ENCODE measurements at regions of chr17 and their contacts with region 1.

Region 1: GRCh38 chr17:82236142-82236981 is 7.5 kb downstream of the SLC16A3 start:
- DNase-seq: peak; percentile 70 to 93 (median 89)
- ATAC-seq: peak; percentile 31 to 58 (median 55)
- H3K4me3 ChIP-seq: no peak overlapping the region
- H3K27ac ChIP-seq: no peak overlapping the region
- H3K4me1 ChIP-seq: peaks cover 4 to 47% (median 29%) of the 10 kb centered on the region in 4 donors
- H3K27me3 ChIP-seq: no peaks in the 10 kb centered on the region
- CTCF ChIP-seq: peak; percentile 85 to 92 (median 88)
- POLR2A ChIP-seq: no peak

Region 2: GRCh38 chr17:82170412-82170961 is 65.9 kb before region 1 on chr17:
- intact Hi-C with region 1: no loop called
- DNase-seq: peak in 2 of 3 donors; percentile 60
- ATAC-seq: peak; percentile 28 to 62 (median 50)
- H3K4me3 ChIP-seq: no peak overlapping the region
- H3K27ac ChIP-seq: no peak overlapping the region
- H3K4me1 ChIP-seq: no peaks in the 10 kb centered on the region
- H3K27me3 ChIP-seq: no peaks in the 10 kb centered on the region
- CTCF ChIP-seq: no peak
- POLR2A ChIP-seq: no peak

Region 3: GRCh38 chr17:82315703-82316358 is 79.5 kb after region 1 on chr17:
- intact Hi-C with region 1: loop called (anchors 5 kb)
- DNase-seq: no peak
- ATAC-seq: peak; percentile 43 to 63 (median 56)
- H3K4me3 ChIP-seq: no peak overlapping the region
- H3K27ac ChIP-seq: no peak overlapping the region
- H3K4me1 ChIP-seq: no peaks in the 10 kb centered on the region
- H3K27me3 ChIP-seq: no peaks in the 10 kb centered on the region
- CTCF ChIP-seq: no peak
- POLR2A ChIP-seq: no peak

Region 4: DNA sequence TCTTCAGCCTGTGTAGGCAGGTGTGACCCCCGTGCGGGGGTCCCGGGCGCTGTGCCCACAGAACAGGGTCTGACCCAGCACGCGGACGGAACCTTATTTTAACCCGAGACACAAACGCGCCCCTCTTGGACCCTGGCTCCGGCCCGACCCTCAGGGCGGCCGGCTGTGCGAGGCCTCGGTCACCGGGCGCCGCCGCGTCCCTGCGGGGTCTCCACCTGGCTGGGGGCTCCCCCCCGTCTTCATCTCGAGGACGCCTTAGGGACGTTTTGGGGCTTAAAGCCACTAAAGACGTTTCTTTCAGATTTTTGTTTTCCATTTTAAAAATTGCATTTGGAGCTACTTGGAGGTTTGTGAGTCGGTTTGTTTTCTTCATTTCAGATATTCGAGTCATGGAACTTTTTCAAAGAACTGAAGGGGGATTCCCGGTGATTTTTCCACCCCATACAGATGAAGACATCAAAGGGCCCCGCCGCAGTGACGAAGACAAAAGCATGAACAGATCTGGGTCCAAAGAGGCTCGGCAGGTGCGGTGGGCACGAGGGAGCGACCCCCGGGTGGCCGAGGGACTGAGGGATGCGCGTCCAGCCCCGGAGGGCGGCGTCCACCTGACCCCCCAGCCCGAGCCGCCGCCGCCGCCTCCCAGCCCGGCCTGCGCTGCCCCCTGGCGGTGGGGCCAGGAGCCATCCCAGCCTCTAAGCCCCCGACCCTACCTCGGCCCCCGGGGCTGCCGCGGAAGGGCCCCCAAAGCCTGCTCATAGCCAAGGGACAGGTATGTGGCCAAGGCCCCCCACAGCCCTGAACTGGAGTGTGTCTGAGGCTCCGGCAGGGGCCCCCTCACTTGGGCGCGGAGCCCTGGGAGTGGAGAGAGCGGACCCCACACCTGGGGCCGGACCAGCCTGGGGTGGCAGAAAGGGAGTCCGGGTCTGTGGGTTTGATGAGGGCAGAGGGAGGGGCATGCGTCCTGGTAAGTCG is 84.9 kb after region 1 on chr17:
- intact Hi-C with region 1: loop called (anchors 5 kb)
- DNase-seq: no peak
- ATAC-seq: peak; percentile 10 to 57 (median 39)
- H3K4me3 ChIP-seq: no peak overlapping the region
- H3K27ac ChIP-seq: no peak overlapping the region
- H3K4me1 ChIP-seq: peaks cover 0 to 17% (median 4%) of the 10 kb centered on the region in 4 donors
- H3K27me3 ChIP-seq: no peaks in the 10 kb centered on the region
- CTCF ChIP-seq: peak; percentile 80 to 94 (median 88)
- POLR2A ChIP-seq: no peak

Region 5: DNA sequence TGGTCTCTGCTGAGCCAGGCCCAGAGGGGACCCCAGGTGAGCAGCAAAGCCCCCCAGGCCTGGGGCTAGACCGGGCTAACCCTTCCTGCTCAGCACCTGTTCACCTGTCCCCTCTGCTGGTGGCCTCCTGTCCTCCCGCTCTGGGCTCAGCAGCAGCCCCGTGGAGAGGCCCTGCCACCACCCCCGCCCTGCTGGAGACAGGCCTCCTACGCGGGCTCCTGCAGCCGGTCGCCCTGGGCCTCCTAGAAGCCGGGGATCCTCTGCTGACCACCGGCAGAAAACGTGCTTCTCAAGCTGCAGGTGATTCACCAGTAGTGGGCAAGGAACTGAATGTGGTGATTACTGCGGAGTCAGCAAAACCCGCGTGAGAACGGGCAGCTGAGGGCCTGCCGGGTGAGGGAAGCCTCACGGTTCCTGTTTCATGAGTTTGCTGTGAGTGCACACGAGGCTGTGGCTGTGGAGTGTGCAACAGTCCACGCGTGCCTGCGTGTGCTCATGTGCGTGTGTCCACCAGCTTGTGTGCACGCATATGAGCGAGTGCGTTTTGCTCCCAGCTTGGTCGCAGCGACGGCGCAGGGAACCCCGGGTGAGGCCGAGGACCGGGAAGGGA is 96.4 kb after region 1 on chr17:
- intact Hi-C with region 1: no loop called
- DNase-seq: peak in 2 of 3 donors; percentile 50 to 77
- ATAC-seq: peak in 1 of 4 donors; percentile 7
- H3K4me3 ChIP-seq: peak overlapping the region; percentile 21 to 55 (median 29)
- H3K27ac ChIP-seq: peak overlapping the region in 1 of 3 donors; percentile 29
- H3K4me1 ChIP-seq: peaks cover 0 to 29% (median 12%) of the 10 kb centered on the region in 4 donors
- H3K27me3 ChIP-seq: no peaks in the 10 kb centered on the region
- CTCF ChIP-seq: no peak
- POLR2A ChIP-seq: no peak